B cell (primary cell): ENCODE measurements at regions of chr5 and their contacts with region 1.

Region 1: DNA sequence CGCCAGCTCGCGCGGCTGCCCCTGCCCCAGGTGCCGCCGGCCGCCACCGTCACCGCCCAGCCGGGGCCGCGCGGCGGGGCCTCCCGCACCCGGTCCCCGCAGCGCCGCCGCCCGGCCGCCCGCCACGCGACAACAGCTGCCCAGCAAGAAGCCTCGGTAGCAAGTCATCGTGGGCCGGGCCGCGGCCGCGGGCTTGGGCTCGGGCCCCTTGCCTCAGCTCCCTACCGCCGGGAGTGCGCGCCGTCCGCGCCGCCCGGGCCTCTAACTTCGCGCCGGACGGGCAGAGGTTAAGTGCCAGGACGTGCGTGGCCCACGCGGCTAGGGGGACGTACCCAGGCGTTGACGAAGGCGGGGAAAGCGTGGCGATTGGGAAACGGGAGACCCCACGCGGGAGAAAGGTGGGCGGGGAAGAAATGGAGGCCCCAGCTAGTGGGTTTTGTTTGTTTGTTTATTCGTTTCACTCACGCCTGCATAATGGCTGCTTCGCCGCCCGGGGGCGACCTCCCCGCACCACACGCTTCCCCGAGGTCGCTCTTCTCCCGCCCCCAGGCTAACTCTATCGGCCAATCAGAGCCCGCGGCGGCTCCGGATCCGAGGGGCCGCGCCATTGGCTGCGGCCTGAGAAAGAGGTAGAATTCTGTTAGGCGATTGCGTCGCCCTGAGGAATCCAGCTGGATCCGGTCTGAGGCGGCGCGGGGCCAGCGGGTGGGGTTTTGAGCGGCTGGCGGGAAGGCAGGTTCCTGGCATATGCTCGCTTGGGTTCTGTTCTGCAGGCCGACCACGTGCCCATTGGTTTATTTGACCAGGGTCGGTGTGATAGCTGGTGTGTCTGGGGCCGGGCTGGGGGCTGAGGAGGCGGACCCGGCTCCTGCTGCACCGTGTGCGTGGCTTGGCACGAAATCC is at the start of gene NADK2:
- DNase-seq: peak; percentile 96
- ATAC-seq: peak; percentile 83
- H3K4me3 ChIP-seq: peak within 1 kb of the TSS; percentile 41 to 91 (median 85)
- H3K4me3 Mint-ChIP-seq: peak within 1 kb of the TSS; percentile 92
- H3K27ac ChIP-seq: peak within 1 kb of the TSS; percentile 92 to 97
- H3K27ac Mint-ChIP-seq: peak within 1 kb of the TSS; percentile 98
- H3K4me1 ChIP-seq: peaks cover 18 to 19% of the 10 kb centered on the region in 2 donors
- H3K4me1 Mint-ChIP-seq: peaks cover 47% of the 10 kb centered on the region
- H3K27me3 ChIP-seq: no peaks in the 10 kb centered on the region
- H3K27me3 Mint-ChIP-seq: no peaks in the 10 kb centered on the region
- CTCF ChIP-seq: peak; percentile 79
- total RNA-seq, gene NADK2: 16.0 and 18.6 TPM in 2 replicates

Region 2: GRCh38 chr5:34838785-34839714 is 1402.8 kb before region 1 on chr5 and contains the start of gene TTC23L:
- CTCF ChIA-PET with region 1: no interaction called
- POLR2A ChIA-PET with region 1: no interaction called
- intact Hi-C with region 1: loop called (anchors 2 kb)
- DNase-seq: peak; percentile 98
- ATAC-seq: peak; percentile 86
- H3K4me3 ChIP-seq: peak within 1 kb of the TSS; percentile 73 to 83 (median 76)
- H3K4me3 Mint-ChIP-seq: peak within 1 kb of the TSS; percentile 98
- H3K27ac ChIP-seq: peak within 1 kb of the TSS; percentile 83 to 94
- H3K27ac Mint-ChIP-seq: peak within 1 kb of the TSS; percentile 97
- H3K4me1 ChIP-seq: peaks cover 3 to 11% of the 10 kb centered on the region in 2 donors
- H3K4me1 Mint-ChIP-seq: peaks cover 17% of the 10 kb centered on the region
- H3K27me3 ChIP-seq: peaks cover 0 to 3% (median 0%) of the 10 kb centered on the region in 4 experiments
- H3K27me3 Mint-ChIP-seq: no peaks in the 10 kb centered on the region
- CTCF ChIP-seq: no peak
- total RNA-seq, gene TTC23L: 0.15 and 1.4 TPM in 2 replicates

Region 3: GRCh38 chr5:34929150-34929719 is 1312.6 kb before region 1 on chr5 and contains the start of gene DNAJC21:
- CTCF ChIA-PET with region 1: no interaction called
- POLR2A ChIA-PET with region 1: no interaction called
- intact Hi-C with region 1: loop called (anchors 1 kb)
- DNase-seq: peak; percentile 99
- ATAC-seq: peak; percentile 89
- H3K4me3 ChIP-seq: peak within 1 kb of the TSS; percentile 60 to 88 (median 73)
- H3K4me3 Mint-ChIP-seq: peak within 1 kb of the TSS; percentile 96
- H3K27ac ChIP-seq: peak within 1 kb of the TSS; percentile 67 to 94
- H3K27ac Mint-ChIP-seq: peak within 1 kb of the TSS; percentile 94
- H3K4me1 ChIP-seq: peaks cover 15 to 20% of the 10 kb centered on the region in 2 donors
- H3K4me1 Mint-ChIP-seq: peaks cover 26% of the 10 kb centered on the region
- H3K27me3 ChIP-seq: no peaks in the 10 kb centered on the region
- H3K27me3 Mint-ChIP-seq: no peaks in the 10 kb centered on the region
- CTCF ChIP-seq: no peak
- total RNA-seq, gene DNAJC21: 58.3 and 59.3 TPM in 2 replicates

Region 4: GRCh38 chr5:36264202-36264760 is 22.4 kb after region 1 on chr5:
- CTCF ChIA-PET with region 1: interaction called, 13 read pairs
- POLR2A ChIA-PET with region 1: no interaction called
- intact Hi-C with region 1: no loop called
- DNase-seq: no peak
- ATAC-seq: no peak
- H3K4me3 ChIP-seq: no peak overlapping the region
- H3K4me3 Mint-ChIP-seq: no peak overlapping the region
- H3K27ac ChIP-seq: no peak overlapping the region
- H3K27ac Mint-ChIP-seq: no peak overlapping the region
- H3K4me1 ChIP-seq: no peaks in the 10 kb centered on the region
- H3K4me1 Mint-ChIP-seq: no peaks in the 10 kb centered on the region
- H3K27me3 ChIP-seq: peaks cover 0 to 5% (median 0%) of the 10 kb centered on the region in 4 experiments
- H3K27me3 Mint-ChIP-seq: peaks cover 10% of the 10 kb centered on the region
- CTCF ChIP-seq: no peak

Region 5: GRCh38 chr5:36690041-36690961 is 448.4 kb after region 1 on chr5:
- CTCF ChIA-PET with region 1: interaction called, 17 read pairs
- POLR2A ChIA-PET with region 1: interaction called, 5 read pairs
- intact Hi-C with region 1: loop called (anchors 5 kb)
- DNase-seq: peak; percentile 84
- ATAC-seq: peak; percentile 83
- H3K4me3 ChIP-seq: peak overlapping the region; percentile 45 to 83 (median 70)
- H3K4me3 Mint-ChIP-seq: peak overlapping the region; percentile 94
- H3K27ac ChIP-seq: peak overlapping the region in 1 of 2 donors; percentile 55
- H3K27ac Mint-ChIP-seq: peak overlapping the region; percentile 82
- H3K4me1 ChIP-seq: peaks cover 25 to 33% of the 10 kb centered on the region in 2 donors
- H3K4me1 Mint-ChIP-seq: peaks cover 41% of the 10 kb centered on the region
- H3K27me3 ChIP-seq: no peaks in the 10 kb centered on the region
- H3K27me3 Mint-ChIP-seq: peaks cover 4% of the 10 kb centered on the region
- CTCF ChIP-seq: peak; percentile 92

Region 6: DNA sequence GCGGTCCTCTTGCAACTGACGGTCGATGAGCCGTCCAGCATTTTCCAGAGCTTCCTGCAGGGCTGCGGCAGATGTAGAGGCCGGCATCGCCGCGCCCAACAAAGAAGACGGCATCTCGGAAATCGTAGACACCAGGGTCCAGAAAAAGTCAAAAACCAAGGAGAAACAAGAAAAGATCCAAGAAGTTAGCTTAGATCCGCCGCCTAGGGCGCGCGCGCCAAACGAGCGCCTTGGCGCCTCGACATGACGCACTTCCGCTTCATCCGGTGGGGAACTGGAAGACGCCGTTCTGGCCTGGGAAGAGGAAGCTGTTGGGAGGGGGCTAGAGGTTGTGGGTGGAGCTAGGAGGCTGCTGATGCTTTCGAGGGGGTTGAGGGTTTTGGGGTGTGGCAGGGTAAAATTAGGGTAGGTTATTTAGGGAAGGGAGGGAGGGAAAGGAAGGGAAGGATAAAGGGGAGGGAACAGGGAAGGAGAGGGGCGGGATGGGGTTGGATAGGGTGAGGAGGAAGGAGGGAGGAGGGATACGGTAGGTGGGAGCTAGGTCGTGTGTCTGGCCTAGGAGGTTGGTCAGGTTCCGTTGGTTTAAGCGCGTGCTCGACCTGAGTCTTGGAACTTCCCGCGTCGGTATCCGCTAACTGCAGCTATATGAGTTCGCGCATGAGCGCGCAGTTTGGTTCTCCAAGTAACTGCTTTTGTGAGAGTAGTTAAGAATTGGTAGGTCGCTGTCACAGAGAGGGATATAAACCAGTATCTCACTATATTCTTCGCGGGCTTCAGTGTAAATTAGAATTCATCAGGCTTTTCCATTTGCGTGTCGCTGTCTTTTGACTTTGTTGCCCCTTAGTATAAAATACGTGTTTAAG is 1129.2 kb after region 1 on chr5 and contains the start of gene NUP155:
- CTCF ChIA-PET with region 1: interaction called, 3 read pairs
- POLR2A ChIA-PET with region 1: no interaction called
- intact Hi-C with region 1: loop called (anchors 5 kb)
- DNase-seq: peak; percentile 93
- ATAC-seq: peak; percentile 94
- H3K4me3 ChIP-seq: peak within 1 kb of the TSS; percentile 71 to 95 (median 94)
- H3K4me3 Mint-ChIP-seq: peak within 1 kb of the TSS; percentile 96
- H3K27ac ChIP-seq: peak within 1 kb of the TSS; percentile 83 to 92
- H3K27ac Mint-ChIP-seq: peak within 1 kb of the TSS; percentile 94
- H3K4me1 ChIP-seq: peaks cover 24% of the 10 kb centered on the region in 2 donors
- H3K4me1 Mint-ChIP-seq: peaks cover 30% of the 10 kb centered on the region
- H3K27me3 ChIP-seq: no peaks in the 10 kb centered on the region
- H3K27me3 Mint-ChIP-seq: no peaks in the 10 kb centered on the region
- CTCF ChIP-seq: no peak
- total RNA-seq, gene NUP155: 33.8 and 34.1 TPM in 2 replicates